ENCODE measurements at regions of chr21 and their contacts with region 1.

Region 1: GRCh38 chr21:25790122-25790877 is 55.5 kb downstream of the GABPA start:
- DNase-seq: no peak
- H3K4me3 ChIP-seq: peak overlapping the region; percentile 24
- H3K27me3 ChIP-seq: no peaks in the 10 kb centered on the region; the same call in 1 of the 2 replicates
- CTCF ChIP-seq: peak; percentile 50

Region 2: DNA sequence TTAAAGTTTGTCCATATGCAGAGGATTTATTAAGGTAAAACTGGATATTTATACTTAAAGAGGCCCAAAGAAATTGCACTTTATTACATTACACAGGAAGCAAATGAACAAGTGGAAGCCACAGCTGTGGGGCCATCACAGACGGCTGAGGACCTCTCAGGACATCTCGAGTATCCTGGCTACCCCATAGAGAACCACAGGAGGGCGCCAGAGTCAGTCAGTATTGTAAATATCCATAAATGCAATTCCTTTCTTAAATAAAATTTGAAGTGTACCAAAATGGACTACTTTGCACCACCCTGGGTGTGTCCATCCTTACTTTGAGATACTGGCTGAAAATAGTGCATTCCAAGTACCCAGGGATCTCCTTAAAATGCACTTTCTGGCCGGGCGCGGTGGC is 440.2 kb before region 1 on chr21:
- CTCF ChIA-PET with region 1: no interaction called
- POLR2A ChIA-PET with region 1: no interaction called
- DNase-seq: no peak
- H3K4me3 ChIP-seq: no peak overlapping the region
- H3K27me3 ChIP-seq: no peaks in the 10 kb centered on the region
- CTCF ChIP-seq: peak; percentile 74

Region 3: DNA sequence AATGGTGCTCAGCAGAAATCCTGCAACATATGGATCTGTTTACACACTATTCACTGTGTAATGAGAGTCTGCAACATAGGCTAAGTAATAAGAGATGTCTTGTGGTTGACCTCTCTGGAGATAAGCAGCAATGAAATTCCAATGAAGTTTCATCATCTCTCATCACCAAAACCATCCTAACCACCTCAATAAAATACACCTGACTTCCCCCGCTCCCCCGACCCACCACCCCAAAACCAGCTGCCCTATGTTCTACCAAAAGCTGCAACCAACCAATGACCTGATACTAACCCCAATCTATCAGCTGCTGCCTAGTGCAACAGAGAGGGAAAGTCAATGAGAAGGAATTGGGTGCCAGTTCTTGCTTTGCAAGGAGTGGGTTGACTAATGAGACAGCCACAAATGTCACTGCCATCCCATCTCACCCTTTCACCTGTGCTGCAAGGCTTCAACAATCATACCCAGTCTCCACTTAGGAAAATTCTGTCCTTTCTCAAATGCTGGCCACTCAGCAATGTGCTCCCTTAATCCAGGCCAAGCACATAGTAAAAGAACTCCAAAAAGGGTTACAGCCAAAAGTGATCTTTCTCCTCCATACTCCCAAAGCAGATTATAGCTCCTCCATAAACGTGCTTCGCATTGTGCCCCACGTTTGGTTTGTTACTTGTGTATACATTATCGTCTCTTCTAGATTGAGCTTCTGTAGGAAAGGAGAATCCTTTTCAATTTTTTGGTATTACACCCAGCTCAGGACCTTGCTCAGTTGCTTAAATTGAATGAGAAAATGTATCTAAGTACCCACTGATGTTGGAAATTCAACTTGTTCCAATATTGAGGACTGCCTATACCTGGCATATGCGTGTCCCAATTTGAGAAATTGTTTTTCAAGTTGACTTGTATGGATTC is 212.0 kb before region 1 on chr21:
- CTCF ChIA-PET with region 1: no interaction called
- POLR2A ChIA-PET with region 1: no interaction called
- DNase-seq: no peak
- H3K4me3 ChIP-seq: no peak overlapping the region
- H3K27me3 ChIP-seq: no peaks in the 10 kb centered on the region
- CTCF ChIP-seq: no peak

Region 4: DNA sequence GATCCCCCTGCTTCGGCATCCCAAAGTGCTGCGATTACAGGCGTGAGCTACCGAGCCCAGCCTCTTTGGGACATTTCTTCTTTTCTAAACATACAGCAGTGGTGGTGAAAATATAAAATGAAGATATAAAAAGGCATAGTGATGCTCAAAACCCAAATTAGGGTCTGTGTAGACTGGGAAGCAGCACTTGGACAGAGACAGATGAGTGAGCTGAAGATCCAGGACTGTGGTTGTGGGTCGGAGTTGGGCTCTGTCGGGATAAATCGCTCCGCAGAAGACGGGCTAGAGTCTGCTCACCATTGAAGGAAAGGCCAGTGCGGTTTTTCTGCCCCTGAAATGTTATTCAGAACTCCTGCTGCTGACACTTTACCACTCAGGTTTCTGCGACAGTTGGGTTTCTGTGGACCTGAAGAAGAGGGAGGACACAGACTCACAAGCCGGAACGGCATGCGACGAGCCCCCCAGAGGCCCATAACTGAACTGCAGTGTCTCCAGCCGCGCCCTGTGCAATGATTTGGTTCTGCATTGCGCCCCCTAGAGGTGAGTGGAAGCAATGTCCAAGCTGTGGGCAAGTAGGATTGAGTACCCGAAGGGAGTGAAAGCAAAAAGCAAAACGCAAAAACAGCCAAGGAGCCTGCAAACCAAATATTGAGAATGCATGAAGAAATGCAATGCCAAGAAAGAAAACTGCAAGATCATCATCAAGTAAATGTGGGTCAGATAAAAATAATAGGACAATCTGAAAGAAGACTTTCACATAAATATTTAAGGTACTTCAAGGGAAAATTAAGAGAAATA is 11.1 kb after region 1 on chr21:
- CTCF ChIA-PET with region 1: interaction called, 17 read pairs
- POLR2A ChIA-PET with region 1: no interaction called
- DNase-seq: no peak
- H3K4me3 ChIP-seq: no peak overlapping the region
- H3K27me3 ChIP-seq: 0 out of 2 replicates have a peak, but pooled peaks cover 1% of the 10 kb centered on the region
- CTCF ChIP-seq: peak; percentile 97

Region 5: GRCh38 chr21:25995278-25995677 is 205.0 kb after region 1 on chr21:
- CTCF ChIA-PET with region 1: no interaction called
- POLR2A ChIA-PET with region 1: no interaction called
- DNase-seq: no peak
- H3K4me3 ChIP-seq: no peak overlapping the region
- H3K27me3 ChIP-seq: no peaks in the 10 kb centered on the region
- CTCF ChIP-seq: no peak

Region 6: GRCh38 chr21:26717146-26717739 is 926.9 kb after region 1 on chr21:
- CTCF ChIA-PET with region 1: interaction called, 10 read pairs
- POLR2A ChIA-PET with region 1: no interaction called
- DNase-seq: no peak
- H3K4me3 ChIP-seq: no peak overlapping the region
- H3K27me3 ChIP-seq: no peaks in the 10 kb centered on the region
- CTCF ChIP-seq: peak; percentile 54